ENCODE measurements at regions of chr17 and their contacts with region 1.

Region 1: DNA sequence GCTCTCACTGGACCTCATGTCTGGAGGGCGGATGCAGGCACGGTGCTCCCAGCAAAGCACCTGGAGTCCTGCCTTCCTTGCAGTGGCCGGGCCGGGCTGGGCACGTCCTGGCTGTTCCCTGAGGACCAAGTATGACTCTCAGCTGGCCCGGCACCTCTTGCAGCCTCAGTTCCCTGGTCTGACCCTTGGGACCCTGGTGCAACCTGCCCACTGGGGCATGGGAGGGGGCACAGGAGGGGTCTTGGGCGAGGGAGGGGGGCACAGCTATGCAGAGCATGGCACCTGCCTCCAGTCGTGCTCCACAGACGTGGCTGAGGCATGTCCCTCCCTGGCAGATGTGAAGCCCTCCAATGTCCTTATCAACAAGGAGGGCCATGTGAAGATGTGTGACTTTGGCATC is 19.6 kb downstream of the MAP2K3 start:
- DNase-seq: no peak
- ATAC-seq: no peak; the same call in 2 of the 3 replicates
- H3K4me3 ChIP-seq: no peak overlapping the region
- H3K27ac ChIP-seq: no peak overlapping the region
- H3K4me1 ChIP-seq: no peaks in the 10 kb centered on the region
- H3K27me3 ChIP-seq: no peaks in the 10 kb centered on the region; a peak in 1 of 5 replicates
- CTCF ChIP-seq: no peak
- EP300 ChIP-seq: no peak
- POLR2A ChIP-seq: peak in 1 of 2 experiments; percentile 43; a peak in 1 of 4 replicates
- RAD21 ChIP-seq: no peak

Region 2: DNA sequence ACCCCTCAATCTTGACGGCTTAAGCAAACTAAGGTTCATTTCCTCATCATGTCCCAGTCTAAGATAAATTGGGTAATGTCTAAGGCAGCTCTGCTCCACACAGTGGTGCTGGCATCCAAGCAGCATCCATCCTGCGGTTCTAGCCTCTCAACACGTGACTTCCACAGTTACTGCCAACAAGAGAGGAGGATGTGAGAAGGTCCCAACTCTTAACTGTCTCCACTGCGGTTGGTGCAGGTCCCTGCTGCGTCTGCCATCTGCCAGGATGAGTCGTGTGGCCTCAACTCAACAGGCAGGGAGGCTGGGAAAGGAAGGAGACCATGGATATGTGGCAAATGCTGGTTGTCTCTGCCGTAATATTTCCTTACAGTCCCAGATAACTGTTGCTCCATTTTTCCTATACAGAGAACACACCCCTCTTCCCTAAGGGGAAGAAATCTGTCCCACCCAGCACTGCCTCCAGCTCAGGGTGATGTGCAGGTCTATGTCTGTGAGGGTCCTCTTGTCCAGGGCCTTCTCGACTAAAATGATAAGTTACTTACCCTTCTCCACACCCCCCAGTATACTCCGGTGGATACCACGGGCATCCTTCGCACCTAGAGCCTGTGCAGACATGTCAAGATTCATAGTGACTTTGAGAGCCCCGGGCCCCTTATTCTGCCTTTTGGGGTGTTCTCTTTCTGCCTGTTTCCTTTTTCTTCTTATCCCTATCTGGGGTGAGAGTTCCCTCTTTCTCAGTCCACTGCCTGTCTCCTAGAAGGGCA is 452.9 kb after region 1 on chr17:
- CTCF ChIA-PET with region 1: no interaction called
- POLR2A ChIA-PET with region 1: no interaction called
- in situ Hi-C with region 1: loop called (anchors 25 kb)
- intact Hi-C with region 1: no loop called
- DNase-seq: no peak
- ATAC-seq: no peak
- H3K4me3 ChIP-seq: no peak overlapping the region
- H3K27ac ChIP-seq: no peak overlapping the region
- H3K4me1 ChIP-seq: no peaks in the 10 kb centered on the region
- H3K27me3 ChIP-seq: no peaks in the 10 kb centered on the region
- CTCF ChIP-seq: no peak
- EP300 ChIP-seq: no peak
- POLR2A ChIP-seq: no peak
- RAD21 ChIP-seq: no peak